ENCODE measurements at regions of chr12 and their contacts with region 1.

Region 1: DNA sequence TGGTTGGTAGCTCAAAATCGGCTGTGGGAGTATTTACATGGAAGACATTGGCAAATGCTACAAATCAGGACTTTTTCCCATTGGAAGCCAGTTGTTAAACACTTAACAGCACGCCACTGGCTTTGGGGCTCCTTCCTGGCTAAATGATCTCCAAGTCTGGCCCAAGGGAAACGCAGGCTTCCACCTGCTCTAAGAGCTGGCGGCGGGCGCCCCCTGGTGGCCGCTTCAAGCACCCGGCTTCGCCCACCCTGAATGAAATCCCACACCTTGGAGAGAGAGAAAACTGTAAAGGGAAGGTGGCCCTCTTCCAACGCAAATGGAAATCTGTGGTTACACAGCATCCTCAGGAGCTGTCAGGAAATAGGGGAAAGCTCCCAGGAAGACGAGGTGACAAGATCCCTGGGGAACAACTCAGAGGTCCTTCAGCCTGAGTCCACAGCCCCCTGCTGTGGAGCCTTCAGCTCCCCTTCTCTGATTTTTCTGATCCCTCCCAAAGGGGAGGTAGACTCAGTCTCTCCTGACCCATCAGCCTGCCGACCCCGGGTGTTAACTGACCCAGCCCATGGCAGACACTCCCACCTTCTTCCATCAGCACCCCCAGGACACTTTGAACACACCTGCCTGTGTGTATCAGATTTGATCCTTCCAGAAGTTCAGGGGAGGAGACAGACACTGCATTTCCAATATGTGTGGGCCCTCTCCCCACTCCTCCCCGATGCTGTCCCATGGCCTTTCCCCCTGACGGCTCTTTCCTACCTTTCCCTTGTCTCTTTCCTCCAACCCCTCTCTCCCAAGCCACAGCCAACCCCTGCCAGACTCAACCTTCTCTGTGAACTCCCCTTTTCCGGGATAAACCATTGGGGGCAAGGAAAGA is 15.4 kb downstream of the SELPLG start:
- DNase-seq: peak; percentile 74 to 89 (median 80)
- ATAC-seq: peak; percentile 72 to 90 (median 80)
- H3K4me3 ChIP-seq: no peak overlapping the region
- H3K27ac ChIP-seq: peak overlapping the region in 1 of 12 donors; percentile 53
- H3K4me1 ChIP-seq: peaks cover 0 to 67% (median 13%) of the 10 kb centered on the region in 12 donors
- H3K27me3 ChIP-seq: no peaks in the 10 kb centered on the region
- CTCF ChIP-seq: peak; percentile 91 to 100 (median 98)
- POLR2A ChIP-seq: no peak

Region 2: GRCh38 chr12:107917912-107918800 is 700.2 kb before region 1 on chr12:
- intact Hi-C with region 1: loop called in 1 of 10 experiments (anchors 5 kb)
- DNase-seq: no peak
- ATAC-seq: peak in 3 of 4 donors; percentile 28 to 48 (median 47)
- H3K4me3 ChIP-seq: no peak overlapping the region
- H3K27ac ChIP-seq: no peak overlapping the region
- H3K4me1 ChIP-seq: no peaks in the 10 kb centered on the region
- H3K27me3 ChIP-seq: peaks cover 0 to 57% (median 4%) of the 10 kb centered on the region in 9 donors
- CTCF ChIP-seq: peak; percentile 14 to 63 (median 49)
- POLR2A ChIP-seq: no peak

Region 3: GRCh38 chr12:108531929-108532848 is 86.1 kb before region 1 on chr12:
- intact Hi-C with region 1: no loop called
- DNase-seq: no peak
- ATAC-seq: no peak
- H3K4me3 ChIP-seq: no peak overlapping the region
- H3K27ac ChIP-seq: no peak overlapping the region
- H3K4me1 ChIP-seq: peaks cover 0 to 4% (median 0%) of the 10 kb centered on the region in 12 donors
- H3K27me3 ChIP-seq: no peaks in the 10 kb centered on the region
- CTCF ChIP-seq: no peak
- POLR2A ChIP-seq: no peak

Region 4: DNA sequence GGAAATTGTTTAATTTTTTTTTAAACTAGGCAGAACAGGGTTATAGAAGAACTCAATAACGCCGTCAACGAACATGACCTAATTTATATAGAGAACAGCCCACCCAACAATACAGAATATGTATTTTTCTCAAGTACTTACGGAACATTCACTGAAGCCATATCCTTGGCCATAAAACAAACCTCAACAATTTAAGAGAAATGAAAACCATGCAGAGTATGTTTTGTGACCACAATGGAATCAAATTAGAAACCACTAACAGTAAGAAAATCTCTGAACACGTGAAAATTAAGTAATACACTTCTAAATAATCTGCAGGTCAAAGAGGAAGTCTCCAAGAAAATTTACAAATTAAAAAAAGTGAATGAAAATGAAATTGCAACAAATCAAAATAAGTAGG is 66.8 kb before region 1 on chr12:
- intact Hi-C with region 1: no loop called
- DNase-seq: no peak
- ATAC-seq: no peak
- H3K4me3 ChIP-seq: no peak overlapping the region
- H3K27ac ChIP-seq: no peak overlapping the region
- H3K4me1 ChIP-seq: peaks cover 0 to 83% (median 36%) of the 10 kb centered on the region in 12 donors
- H3K27me3 ChIP-seq: no peaks in the 10 kb centered on the region
- CTCF ChIP-seq: no peak
- POLR2A ChIP-seq: no peak

Region 5: DNA sequence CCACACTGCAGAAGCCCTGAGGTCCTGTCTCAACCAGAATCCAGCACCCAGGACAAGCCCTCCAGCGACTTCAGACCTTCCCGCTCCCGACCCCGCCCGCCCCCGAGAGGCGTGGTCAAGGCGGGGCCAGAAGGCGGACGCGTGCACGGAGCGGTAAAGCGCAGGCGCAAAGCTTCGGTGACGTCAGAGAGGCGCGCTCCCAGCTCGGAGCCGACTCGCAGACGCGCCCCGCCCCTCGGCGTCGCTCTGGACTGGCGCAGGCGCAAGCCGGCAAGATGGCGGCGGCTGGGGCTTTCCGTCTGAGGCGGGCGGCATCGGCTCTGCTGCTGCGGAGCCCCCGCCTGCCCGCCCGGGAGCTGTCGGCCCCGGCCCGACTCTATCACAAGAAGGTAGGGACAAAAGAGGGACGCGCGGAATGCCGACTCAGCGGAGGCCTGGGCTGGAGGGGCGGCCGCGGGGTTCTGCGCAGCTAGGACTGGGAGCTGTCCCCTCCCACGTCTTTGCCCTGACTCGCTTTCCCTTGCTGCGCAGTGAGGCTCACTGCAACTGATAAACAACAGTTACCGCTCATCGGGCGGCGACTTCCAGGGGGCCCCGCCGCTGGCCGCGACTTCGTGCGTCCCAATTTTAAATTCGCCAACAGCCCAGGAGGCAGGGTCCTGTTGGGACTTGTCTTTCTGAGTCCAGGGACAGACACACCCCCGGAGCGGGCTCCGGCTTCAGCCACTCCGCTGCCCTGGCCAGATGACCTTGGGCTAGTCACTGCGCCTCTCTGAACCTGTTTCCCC is 55.8 kb before region 1 on chr12 and contains the start of gene ISCU:
- intact Hi-C with region 1: loop called in 9 of 10 experiments (anchors 1 to 5 kb)
- DNase-seq: peak; percentile 97 to 100 (median 98)
- ATAC-seq: peak; percentile 84 to 90 (median 88)
- H3K4me3 ChIP-seq: peak within 1 kb of the TSS; percentile 67 to 100 (median 89)
- H3K27ac ChIP-seq: peak within 1 kb of the TSS; percentile 84 to 98 (median 95)
- H3K4me1 ChIP-seq: peaks cover 7 to 81% (median 56%) of the 10 kb centered on the region in 12 donors
- H3K27me3 ChIP-seq: no peaks in the 10 kb centered on the region
- CTCF ChIP-seq: no peak
- POLR2A ChIP-seq: peak; percentile 86 to 98
- total RNA-seq, gene ISCU: 289 to 632 (median 497) TPM

Region 6: DNA sequence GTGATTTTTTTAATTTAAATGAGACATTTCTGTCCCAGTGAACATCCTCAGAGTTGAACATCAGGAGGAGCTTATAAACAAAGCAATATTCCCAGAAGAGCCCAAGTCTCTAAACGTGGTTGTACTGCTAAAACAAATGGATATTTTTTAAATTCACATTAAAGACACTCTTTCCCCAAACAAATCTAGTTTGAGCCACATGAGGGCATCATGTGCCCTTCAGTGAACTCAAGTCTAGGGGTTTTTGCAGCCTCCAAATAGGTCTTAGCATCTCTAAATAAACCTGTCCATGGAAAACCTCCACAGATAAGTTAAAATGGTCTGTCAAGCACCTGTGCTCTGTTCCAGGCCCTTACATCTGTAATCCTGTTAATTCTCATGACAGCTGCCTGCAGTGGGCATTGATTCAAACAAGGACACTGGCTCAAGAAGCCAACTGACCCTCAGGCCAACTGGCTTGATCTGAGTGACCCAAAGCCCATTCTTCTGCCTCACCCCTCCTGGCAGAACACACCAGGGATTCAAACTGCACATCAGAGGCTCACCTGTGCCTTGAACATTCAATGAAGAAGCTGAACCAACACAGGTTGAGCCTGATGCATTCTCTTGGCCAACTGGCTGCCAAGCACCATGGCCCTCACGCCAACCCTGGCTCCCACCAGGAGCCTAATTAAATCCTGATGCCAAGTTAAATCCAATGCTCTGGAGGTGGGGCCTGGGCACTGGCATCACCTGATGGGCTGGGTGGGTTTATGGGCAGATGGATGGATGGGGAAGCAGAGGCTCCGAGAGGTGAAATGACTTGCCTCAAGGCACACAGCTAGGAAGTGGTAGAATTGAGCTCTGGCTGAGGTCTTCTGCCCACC is 47.3 kb before region 1 on chr12:
- intact Hi-C with region 1: loop called in 5 of 10 experiments (anchors 1 to 5 kb)
- DNase-seq: peak in 1 of 5 donors; percentile 1
- ATAC-seq: no peak
- H3K4me3 ChIP-seq: no peak overlapping the region
- H3K27ac ChIP-seq: no peak overlapping the region
- H3K4me1 ChIP-seq: peaks cover 0 to 26% (median 12%) of the 10 kb centered on the region in 12 donors
- H3K27me3 ChIP-seq: no peaks in the 10 kb centered on the region
- CTCF ChIP-seq: peak in 9 of 12 donors; percentile 16 to 58 (median 37)
- POLR2A ChIP-seq: no peak

Region 7: GRCh38 chr12:108811411-108812180 is 193.3 kb after region 1 on chr12:
- intact Hi-C with region 1: no loop called
- DNase-seq: no peak
- ATAC-seq: peak in 2 of 4 donors; percentile 2 to 16
- H3K4me3 ChIP-seq: no peak overlapping the region
- H3K27ac ChIP-seq: peak overlapping the region in 8 of 12 donors; percentile 8 to 54 (median 30)
- H3K4me1 ChIP-seq: peaks cover 0 to 62% (median 40%) of the 10 kb centered on the region in 12 donors
- H3K27me3 ChIP-seq: no peaks in the 10 kb centered on the region
- CTCF ChIP-seq: no peak
- POLR2A ChIP-seq: no peak

Measured in heart left ventricle (tissue), 16 donors.